Posterior cingulate gyrus (tissue), 11 donors: ENCODE measurements at regions of chr11 and their contacts with region 1.

Region 1: DNA sequence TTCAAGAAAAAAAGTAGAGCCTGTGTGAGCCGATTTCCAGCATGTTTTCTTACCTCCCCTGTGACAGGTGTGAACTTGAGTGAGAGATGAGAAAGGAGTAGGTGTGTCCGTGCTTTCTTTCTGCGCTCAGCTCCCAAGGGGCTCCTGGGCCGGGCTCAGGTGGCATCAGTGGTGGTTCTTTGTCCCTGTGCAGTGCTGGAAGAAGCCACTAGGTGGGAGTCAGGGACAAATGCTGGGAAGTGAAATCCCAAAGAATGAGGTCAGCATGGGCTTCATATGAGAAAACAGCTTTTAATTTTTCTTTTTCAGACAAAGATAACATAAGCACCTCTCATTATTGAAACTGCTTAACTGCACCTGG is 57.8 kb downstream of the PPFIBP2 start:
- DNase-seq: peak in 9 of 10 donors; percentile 40 to 93 (median 76)

Region 2: DNA sequence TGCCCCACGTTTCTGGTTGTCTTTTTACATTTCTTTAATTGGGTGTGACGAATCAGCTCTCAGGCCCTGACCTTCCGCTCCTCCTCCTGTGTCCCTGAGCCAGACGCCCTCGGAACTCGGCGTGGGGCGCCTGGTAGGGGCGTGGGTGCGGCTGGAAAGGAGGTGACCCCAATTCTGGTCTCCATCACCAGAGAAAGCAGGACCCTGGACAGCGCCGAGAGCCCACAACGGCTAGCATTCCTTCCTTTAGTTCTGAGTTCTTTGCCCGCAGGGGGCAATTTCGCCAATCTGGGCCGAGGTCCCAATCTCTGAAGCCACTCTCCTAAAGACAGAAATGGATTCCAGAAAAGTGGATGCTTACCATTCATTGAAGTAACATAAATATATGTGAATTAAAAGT is 494.5 kb before region 1 on chr11:
- intact Hi-C with region 1: no loop called
- DNase-seq: peak in 1 of 10 donors; percentile 46

Region 3: DNA sequence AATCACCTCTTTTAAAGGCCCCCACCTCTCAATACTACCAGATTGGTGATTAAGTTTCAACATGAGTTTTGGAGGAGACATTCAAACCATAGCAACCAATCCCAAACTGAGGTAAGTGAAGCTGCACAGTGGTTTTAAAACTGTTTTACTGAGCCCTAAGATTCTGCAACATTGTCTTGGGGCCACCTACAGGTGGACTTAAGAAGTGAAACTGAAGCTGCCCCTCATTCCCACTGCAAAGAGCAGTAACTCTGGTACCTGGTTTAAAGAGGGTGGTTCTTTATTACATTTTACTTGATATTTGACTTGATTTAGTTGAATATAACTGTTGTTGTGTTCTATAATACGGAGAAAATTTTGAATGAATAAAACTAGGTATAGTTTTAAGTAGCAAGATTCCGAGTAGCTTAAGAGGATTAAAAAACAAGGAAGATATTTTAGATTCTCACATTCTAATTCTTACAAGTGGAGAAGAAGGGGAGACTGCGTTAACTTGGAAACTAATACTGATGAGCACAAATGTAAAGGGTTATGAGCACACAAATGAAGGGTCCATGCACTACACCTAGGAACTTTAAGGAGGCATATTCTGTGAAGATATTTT is 293.2 kb before region 1 on chr11:
- intact Hi-C with region 1: no loop called
- DNase-seq: peak in 1 of 10 donors; percentile 27

Region 4: GRCh38 chr11:7600205-7600775 is 28.7 kb after region 1 on chr11:
- intact Hi-C with region 1: no loop called
- DNase-seq: peak in 2 of 10 donors; percentile 67 to 89

Region 5: DNA sequence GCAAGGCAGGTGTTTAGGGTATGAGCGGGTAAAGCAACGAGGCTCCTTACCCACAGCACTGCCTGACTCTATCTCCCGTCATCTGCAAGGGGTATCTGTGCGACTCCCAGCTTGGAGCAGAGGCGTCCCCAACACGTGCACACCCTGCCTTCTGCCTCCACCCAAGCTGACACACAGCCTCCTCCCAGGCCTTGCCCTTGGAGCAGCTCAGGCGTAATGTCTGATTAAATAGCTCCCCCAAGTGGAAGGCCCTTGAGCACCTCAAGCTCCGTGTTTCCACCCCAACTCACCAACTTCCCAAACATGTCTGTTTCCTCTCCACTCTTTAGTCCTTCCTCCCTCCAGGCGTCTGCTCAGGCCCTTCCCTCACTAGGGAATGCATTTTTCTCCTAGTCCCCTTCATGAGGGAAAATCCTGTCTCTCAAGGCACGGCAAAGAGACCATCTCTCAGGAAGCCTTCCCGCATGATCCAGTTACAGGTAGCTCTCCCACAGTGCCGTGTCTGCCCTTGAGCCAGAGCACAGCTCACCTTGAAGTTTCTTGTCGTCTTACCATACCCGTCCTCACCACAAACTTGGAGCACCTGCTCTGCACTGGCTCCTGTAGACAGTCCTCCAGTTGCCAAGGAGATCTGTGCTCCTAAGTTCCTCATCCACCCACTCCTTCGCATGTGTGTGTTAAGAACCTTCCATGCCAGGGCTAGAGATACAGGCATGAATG is 85.8 kb after region 1 on chr11:
- intact Hi-C with region 1: loop called (anchors 1 kb)
- DNase-seq: peak in 9 of 10 donors; percentile 50 to 96 (median 65)